Activated CD4-positive, alpha-beta memory T cell treated with anti-CD3 and anti-CD28 coated beads for 36 hours (primary cell): ENCODE measurements at regions of chr7 and their contacts with region 1.

Region 1: DNA sequence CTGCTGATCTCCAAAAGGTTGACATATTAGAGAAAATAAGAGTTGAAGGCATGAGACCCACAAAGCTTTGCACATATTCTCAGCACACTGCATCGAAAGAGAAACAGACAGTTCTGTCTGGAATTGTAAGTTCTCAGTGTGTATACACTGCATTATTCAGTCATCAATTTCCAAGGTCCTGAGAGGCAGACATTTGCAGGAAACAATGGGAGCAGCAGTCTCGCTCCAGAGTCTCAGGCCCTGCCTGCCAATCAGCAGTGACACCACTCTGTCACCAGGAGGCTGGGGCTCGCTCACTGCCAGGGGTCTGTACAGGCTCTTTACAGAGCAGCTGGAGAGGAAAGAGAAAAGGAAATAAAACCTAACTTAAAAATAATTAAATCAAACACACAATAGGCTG is 36.3 kb downstream of the JAZF1 start:
- DNase-seq: no peak
- H3K4me3 Mint-ChIP-seq: no peak overlapping the region
- H3K27ac Mint-ChIP-seq: no peak overlapping the region
- H3K4me1 Mint-ChIP-seq: peaks cover 18% of the 10 kb centered on the region
- H3K27me3 Mint-ChIP-seq: peaks cover 1% of the 10 kb centered on the region

Region 2: DNA sequence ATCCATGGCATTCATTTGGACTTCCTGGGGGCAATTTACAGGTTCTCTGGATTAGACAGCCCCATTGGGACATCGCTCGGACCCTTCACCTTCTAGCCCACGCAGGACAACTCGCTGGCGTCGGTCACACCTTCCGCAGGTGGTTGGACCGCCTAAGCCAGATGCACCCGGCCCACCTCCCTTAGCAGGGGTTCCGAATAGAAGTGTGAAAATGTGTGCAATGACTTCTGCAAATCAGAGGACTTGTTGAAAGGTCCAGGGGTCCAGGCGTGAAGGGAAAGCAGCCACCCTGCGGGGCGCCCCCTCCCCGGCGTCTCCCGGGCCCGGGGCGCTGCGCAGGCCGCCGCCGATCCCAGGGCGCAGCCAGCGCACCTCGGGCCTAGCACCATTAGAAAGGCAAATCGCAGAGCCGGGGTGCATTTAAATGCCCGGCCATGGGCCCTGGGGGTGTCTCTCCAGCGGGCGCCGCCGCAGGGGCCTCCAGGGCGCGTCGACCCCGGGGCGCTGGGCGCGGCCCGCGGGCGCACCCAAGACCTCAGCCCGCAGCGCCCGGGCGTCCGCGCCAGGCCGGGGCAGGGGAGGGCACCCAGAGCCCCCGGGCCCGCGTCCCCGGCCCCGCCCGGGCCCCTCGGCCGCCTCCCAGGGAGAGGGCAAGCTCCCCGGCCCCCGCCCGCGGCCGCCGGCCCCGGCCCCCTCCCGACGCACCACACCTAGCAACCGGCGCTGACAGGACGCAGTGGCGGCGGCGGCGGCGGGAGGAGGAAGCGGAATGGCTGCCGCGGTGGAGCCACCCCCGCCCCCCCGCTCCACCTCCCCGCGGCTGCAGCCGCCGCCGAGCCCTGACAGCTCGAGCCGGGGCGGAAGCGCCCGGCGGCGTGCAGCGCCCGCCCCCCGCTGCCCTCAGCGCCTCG is 35.1 kb after region 1 on chr7:
- CTCF ChIA-PET with region 1: no interaction called
- POLR2A ChIA-PET with region 1: no interaction called
- intact Hi-C with region 1: loop called (anchors 5 kb)
- DNase-seq: peak; percentile 79
- H3K4me3 Mint-ChIP-seq: peak overlapping the region; percentile 70
- H3K27ac Mint-ChIP-seq: peak overlapping the region; percentile 26
- H3K4me1 Mint-ChIP-seq: peaks cover 32% of the 10 kb centered on the region
- H3K27me3 Mint-ChIP-seq: peaks cover 7% of the 10 kb centered on the region